Right cardiac atrium (tissue), 5 donors: ENCODE measurements at regions of chr5 and their contacts with region 1.

Region 1: DNA sequence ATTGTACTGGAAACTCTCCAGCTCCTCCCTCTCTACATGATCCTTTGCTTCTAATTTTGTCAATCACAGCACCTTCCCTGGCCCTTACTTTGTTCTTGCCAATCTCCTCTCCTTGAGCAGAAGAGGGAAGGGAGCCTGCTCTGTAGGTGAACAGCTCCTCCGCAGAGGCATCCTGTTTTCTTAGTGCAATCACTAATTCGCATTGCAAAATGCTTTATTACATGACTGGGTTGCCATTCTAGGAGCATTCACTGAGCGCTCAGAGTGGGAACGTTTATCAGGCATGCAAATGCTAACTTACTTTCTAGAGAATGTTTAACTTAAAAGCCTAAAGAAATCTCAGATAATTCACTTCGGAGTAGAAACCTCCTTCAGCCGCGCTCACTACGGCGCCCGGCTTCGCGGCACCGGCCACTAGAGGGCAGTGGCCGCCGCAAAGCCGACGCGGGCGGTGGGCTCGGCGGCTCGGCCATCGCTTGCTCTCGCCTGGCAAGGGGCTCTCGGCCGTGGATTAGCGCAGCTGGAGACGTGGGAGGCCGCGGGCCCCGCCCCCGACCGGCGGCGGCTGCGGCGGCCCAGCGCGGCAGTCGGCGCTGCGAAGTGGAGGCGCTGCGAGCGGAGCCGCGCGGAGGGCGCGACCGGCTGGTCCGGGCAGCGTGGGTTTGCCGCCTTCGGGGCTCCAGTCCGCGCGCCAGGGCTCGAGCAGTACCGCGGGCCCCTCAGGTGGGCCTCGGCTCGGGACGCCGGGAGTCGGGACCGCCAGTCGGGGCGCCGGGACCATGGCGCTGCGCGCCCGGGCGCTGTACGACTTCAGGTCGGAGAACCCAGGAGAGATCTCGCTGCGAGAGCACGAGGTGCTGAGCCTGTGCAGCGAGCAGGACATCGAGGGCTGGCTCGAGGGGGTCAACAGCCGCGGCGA is at the start of gene SNX18:
- DNase-seq: peak; percentile 94 to 97 (median 97)
- ATAC-seq: peak; percentile 95 to 96
- H3K4me3 ChIP-seq: peak within 1 kb of the TSS; percentile 81
- H3K27ac ChIP-seq: peak within 1 kb of the TSS; percentile 70
- H3K4me1 ChIP-seq: peaks cover 5% of the 10 kb centered on the region
- H3K27me3 ChIP-seq: no peaks in the 10 kb centered on the region
- total RNA-seq, gene SNX18: 12.0 to 14.0 (median 12.8) TPM

Region 2: DNA sequence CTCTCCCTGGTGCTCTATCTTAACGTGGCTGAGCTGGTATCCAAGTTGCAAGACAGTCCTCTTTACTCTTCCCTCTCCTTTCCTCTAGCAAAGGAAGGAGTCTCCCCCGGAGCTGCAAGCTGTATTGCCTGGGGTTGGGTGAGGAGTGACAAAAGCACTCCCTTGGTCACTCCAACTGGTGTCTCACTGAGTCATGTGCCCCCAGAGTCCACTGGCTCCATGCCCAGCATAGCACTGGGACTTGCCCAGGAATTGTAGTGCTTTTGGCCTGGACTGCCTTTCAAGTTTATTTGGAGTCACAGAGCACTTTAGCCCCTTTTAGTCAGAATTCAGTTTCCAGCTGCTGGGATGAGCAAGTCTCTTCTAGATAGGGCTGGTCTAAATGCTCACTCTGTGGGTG is 1119.6 kb before region 1 on chr5:
- intact Hi-C with region 1: no loop called
- DNase-seq: peak in 2 of 3 donors; percentile 23 to 69
- ATAC-seq: no peak
- H3K4me3 ChIP-seq: no peak overlapping the region
- H3K27ac ChIP-seq: no peak overlapping the region
- H3K4me1 ChIP-seq: no peaks in the 10 kb centered on the region
- H3K27me3 ChIP-seq: no peaks in the 10 kb centered on the region

Region 3: DNA sequence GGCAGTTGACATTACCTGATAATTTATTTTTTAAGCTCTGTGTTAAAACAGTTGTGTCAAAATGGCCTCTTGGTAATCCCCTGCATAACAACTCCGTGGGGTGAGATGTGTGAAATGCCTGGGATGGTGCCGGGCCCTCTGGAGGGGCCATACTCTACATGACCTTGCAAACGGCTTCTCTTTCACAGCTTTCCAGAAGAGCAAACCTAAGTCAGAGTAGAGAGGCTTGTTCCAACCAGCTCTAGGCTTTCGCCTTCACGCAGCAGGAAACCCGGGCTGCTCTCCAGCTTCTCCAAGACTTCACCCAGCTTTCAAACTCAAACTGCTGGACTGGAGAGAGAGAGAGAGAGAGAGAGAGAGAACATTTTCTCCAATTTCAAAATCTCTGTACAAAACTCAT is 120.2 kb after region 1 on chr5:
- intact Hi-C with region 1: loop called in 2 of 4 experiments (anchors 10 kb)
- DNase-seq: peak; percentile 56 to 86 (median 78)
- ATAC-seq: peak; percentile 63 to 87
- H3K4me3 ChIP-seq: no peak overlapping the region
- H3K27ac ChIP-seq: no peak overlapping the region
- H3K4me1 ChIP-seq: peaks cover 2% of the 10 kb centered on the region
- H3K27me3 ChIP-seq: no peaks in the 10 kb centered on the region

Region 4: DNA sequence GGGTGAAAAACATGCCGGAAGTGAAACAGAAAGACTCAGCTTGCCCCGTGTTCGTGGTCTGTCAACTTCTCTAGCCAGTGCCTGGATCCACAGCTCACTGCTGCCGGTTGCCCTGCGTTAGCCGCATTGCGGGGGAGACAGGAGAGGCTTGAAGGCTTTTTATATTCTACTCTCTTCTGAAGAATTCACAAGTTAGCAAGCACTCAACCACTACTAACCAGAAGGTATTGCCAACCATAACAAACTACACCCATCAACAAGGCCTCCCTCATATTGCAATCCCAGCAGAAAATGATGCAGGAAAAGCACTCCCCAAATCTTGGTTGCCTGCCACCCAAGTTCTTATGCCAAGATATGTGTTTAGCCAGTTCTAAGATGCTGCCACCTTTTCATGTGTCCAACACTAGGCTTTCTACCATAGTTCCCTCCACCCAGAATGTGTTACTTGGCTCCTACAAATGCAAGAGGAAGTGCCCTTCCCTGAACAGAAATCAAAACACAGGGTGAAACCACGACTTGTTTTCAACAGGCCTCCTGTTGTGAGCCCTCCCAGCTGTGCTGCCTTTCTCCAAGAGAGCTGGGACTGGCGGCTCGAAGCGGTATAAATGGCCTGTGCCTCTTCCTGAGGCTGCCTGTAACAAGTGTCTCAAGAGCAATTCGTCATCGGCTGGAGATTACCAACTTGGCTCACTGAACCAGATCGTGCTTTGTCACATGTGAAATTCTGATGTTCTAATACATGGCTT is 129.1 kb after region 1 on chr5:
- intact Hi-C with region 1: loop called in 1 of 4 experiments (anchors 10 kb)
- DNase-seq: peak; percentile 93 to 96 (median 93)
- ATAC-seq: peak; percentile 97 to 98
- H3K4me3 ChIP-seq: no peak overlapping the region
- H3K27ac ChIP-seq: peak overlapping the region; percentile 92
- H3K4me1 ChIP-seq: peaks cover 12% of the 10 kb centered on the region
- H3K27me3 ChIP-seq: no peaks in the 10 kb centered on the region

Region 5: GRCh38 chr5:54761213-54761701 is 243.8 kb after region 1 on chr5:
- intact Hi-C with region 1: loop called in 1 of 4 experiments (anchors 10 kb)
- DNase-seq: peak in 1 of 3 donors; percentile 62
- ATAC-seq: peak; percentile 65 to 85
- H3K4me3 ChIP-seq: no peak overlapping the region
- H3K27ac ChIP-seq: no peak overlapping the region
- H3K4me1 ChIP-seq: peaks cover 6% of the 10 kb centered on the region
- H3K27me3 ChIP-seq: no peaks in the 10 kb centered on the region

Region 6: DNA sequence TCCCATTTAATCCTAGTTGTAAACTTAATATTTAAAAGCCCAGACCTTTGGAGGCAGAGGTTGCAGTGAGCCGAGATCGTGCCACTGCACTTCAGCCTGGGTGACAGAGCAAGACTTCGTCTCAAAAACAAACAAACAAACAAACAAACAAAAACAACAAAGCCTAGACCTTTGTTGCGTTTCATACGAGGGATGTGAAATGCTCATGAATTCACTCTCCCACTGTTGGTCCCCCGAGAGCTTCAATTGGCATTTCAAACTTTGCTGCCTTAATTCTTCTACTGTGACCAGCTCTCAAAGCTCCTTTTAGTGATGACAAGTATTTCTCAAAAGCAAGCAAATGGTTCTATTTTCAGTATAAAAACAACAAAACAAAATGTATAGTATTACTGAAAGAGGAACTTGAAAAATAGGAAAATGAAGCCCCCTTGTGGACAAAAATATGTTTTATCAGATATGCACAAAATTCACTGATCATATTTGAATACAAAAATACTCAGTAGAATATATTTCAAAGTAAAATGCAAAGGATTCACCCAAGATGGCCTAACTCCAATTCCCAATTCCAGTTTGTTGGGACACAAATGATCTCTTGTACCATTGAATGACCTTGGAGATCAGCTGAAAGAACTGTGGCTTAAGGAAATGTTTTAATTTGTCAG is 327.6 kb after region 1 on chr5:
- intact Hi-C with region 1: loop called (anchors 1 to 5 kb)
- DNase-seq: no peak
- ATAC-seq: peak in 1 of 2 donors; percentile 46
- H3K4me3 ChIP-seq: no peak overlapping the region
- H3K27ac ChIP-seq: no peak overlapping the region
- H3K4me1 ChIP-seq: no peaks in the 10 kb centered on the region
- H3K27me3 ChIP-seq: no peaks in the 10 kb centered on the region

Region 7: GRCh38 chr5:54867310-54867944 is 350.0 kb after region 1 on chr5:
- intact Hi-C with region 1: loop called in 1 of 4 experiments (anchors 5 kb)
- DNase-seq: no peak
- ATAC-seq: peak in 1 of 2 donors; percentile 46
- H3K4me3 ChIP-seq: peak overlapping the region; percentile 37
- H3K27ac ChIP-seq: no peak overlapping the region
- H3K4me1 ChIP-seq: no peaks in the 10 kb centered on the region
- H3K27me3 ChIP-seq: no peaks in the 10 kb centered on the region